Psoas muscle (tissue), 8 donors: ENCODE measurements at regions of chr6 and their contacts with region 1.

Region 1: GRCh38 chr6:20092071-20092566 is 120.2 kb downstream of the MBOAT1 start:
- DNase-seq: no peak
- ATAC-seq: peak in 2 of 4 donors; percentile 37 to 72
- H3K4me3 ChIP-seq: no peak overlapping the region
- H3K27ac ChIP-seq: no peak overlapping the region
- H3K4me1 ChIP-seq: no peaks in the 10 kb centered on the region
- H3K27me3 ChIP-seq: no peaks in the 10 kb centered on the region
- CTCF ChIP-seq: peak; percentile 66

Region 2: DNA sequence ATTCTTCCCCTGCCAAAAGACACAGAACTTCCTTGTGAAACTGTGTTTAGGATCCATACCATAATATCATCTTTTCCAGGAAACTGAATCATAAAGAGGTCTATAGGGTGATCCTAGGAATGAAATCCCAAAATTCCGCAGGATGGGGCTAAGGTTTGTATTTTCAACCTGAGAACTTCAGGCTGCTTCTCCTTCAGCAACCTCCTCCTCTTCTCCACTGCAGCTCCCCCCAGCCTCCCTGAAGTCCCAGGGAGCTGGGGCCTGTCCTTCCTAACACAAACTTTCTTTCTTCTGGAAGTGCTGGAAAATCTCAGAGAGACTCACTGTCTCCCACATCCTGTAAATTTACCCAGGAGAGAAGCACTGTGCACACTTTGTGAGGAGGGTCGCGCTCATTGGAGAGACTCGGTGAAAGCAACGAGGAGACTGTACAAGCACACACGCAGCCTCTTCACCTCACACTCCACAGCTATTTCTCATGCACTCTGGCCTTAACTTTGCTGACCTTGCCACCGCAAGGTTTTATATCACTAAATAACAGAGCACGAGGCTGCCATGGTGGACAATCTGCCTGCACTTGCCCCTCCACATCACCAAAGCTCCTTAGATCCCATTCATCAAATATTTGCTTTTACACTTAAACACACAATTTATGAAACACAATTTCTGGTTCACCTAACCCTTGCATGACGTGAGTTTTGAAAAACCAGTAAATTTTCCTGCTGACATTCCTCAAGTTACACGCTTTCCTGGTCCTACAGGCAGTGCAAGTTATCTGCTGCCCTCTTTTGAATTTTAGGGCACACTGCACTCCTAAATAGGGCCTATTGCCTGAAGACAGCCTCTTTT is 240.7 kb before region 1 on chr6:
- intact Hi-C with region 1: no loop called
- DNase-seq: no peak
- ATAC-seq: peak; percentile 73 to 84 (median 79)
- H3K4me3 ChIP-seq: no peak overlapping the region
- H3K27ac ChIP-seq: no peak overlapping the region
- H3K4me1 ChIP-seq: no peaks in the 10 kb centered on the region
- H3K27me3 ChIP-seq: no peaks in the 10 kb centered on the region
- CTCF ChIP-seq: peak; percentile 88

Region 3: GRCh38 chr6:20126789-20127653 is 34.9 kb after region 1 on chr6:
- intact Hi-C with region 1: loop called (anchors 2 kb)
- DNase-seq: peak; percentile 66 to 81
- ATAC-seq: peak; percentile 79 to 90 (median 87)
- H3K4me3 ChIP-seq: peak overlapping the region; percentile 5
- H3K27ac ChIP-seq: peak overlapping the region; percentile 5
- H3K4me1 ChIP-seq: peaks cover 7% of the 10 kb centered on the region
- H3K27me3 ChIP-seq: no peaks in the 10 kb centered on the region
- CTCF ChIP-seq: peak; percentile 89